ENCODE measurements at regions of chr2 and their contacts with region 1.

Region 1: GRCh38 chr2:201984800-201985525 is 48.7 kb upstream of the FZD7 start:
- DNase-seq: no peak
- ATAC-seq: peak in 1 of 4 donors; percentile 28
- H3K4me3 ChIP-seq: no peak overlapping the region
- H3K27ac ChIP-seq: no peak overlapping the region
- H3K4me1 ChIP-seq: no peaks in the 10 kb centered on the region
- H3K27me3 ChIP-seq: no peaks in the 10 kb centered on the region
- CTCF ChIP-seq: no peak

Region 2: DNA sequence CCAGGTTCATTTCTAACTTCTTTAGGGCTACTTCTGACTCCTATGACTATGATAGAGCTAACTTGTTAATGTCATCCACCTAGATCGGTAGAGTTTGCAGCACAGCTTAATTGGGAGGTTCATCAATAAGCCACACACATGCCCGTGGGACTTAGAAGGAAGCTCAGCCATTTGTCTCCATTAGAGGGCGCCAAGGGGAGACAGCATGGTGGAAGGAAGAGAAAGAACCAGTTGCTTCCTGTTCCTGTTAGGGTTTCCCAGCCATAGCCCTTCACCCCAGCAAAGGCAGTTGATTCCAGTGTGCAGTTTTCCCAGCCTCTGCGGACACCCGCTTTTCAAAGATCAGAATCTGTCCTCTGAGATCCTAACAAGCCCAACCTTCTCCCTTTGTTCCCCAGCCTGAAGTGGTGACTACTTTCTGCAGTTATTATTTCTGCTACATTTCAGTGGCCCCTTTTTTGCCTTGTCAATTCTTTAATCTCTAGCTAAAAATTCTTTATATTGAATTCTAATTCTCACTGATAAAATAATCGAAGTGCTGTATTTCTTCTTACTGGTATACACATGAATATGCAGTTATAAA is 1999.2 kb before region 1 on chr2:
- intact Hi-C with region 1: loop called in 1 of 2 experiments (anchors 10 kb)
- DNase-seq: peak; percentile 28 to 55
- ATAC-seq: peak; percentile 49 to 81 (median 62)
- H3K4me3 ChIP-seq: no peak overlapping the region
- H3K27ac ChIP-seq: no peak overlapping the region
- H3K4me1 ChIP-seq: no peaks in the 10 kb centered on the region
- H3K27me3 ChIP-seq: no peaks in the 10 kb centered on the region
- CTCF ChIP-seq: peak; percentile 59

Measured in psoas muscle (tissue), 8 donors.